ENCODE measurements at regions of chr1 and their contacts with region 1.

Region 1: DNA sequence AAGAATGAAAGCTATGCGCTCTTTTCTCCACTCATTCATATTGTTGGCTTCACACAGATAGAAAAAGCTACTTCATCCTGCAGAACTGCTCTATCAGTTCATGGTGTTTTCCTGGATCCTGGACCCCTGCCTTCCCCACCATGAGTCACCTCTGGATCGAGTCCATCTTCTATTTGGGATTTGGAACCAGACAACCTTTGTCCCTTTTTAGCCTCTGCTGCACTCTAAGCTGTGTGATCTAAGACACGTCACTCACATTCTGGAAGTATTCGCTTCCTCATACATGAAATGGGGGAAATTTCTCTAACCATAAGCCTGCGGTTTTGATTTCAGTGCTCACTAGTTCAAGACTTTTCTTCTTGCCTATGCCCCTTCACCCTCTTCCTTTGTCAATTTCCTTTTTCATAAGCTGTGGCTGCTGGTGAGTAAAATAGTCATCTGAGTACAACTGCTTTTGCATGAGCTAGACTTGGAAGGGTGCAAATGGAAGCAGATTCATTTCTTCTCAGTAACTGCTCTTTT is 14.1 kb upstream of the DEGS1 start:
- DNase-seq: peak; percentile 38
- H3K4me3 Mint-ChIP-seq: no peak overlapping the region
- H3K27ac Mint-ChIP-seq: peak overlapping the region; percentile 65
- H3K4me1 Mint-ChIP-seq: peaks cover 22% of the 10 kb centered on the region
- H3K27me3 Mint-ChIP-seq: no peaks in the 10 kb centered on the region
- CTCF ChIP-seq: no peak

Region 2: DNA sequence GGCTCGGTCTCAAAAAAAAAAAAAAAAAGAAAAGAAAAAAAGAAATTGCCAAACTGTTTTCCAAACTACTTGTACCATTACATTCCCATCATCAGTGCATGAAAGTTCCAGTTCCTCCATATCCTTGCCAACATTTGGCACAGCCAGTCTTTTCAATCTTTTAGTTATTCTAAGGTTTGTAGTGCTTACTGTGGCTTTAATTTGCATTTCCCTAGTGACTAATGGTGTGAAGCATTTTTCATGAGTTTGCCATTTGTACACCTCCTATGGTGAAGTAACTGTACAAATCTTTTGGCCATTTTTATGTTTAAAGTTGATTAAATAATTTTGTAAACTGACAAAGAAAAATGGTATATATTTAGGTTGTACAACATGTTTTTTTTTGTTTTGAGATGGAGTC is 84.8 kb after region 1 on chr1:
- CTCF ChIA-PET with region 1: no interaction called
- intact Hi-C with region 1: no loop called
- DNase-seq: no peak
- H3K4me3 Mint-ChIP-seq: no peak overlapping the region
- H3K27ac Mint-ChIP-seq: no peak overlapping the region
- H3K4me1 Mint-ChIP-seq: no peaks in the 10 kb centered on the region
- H3K27me3 Mint-ChIP-seq: no peaks in the 10 kb centered on the region
- CTCF ChIP-seq: no peak

Region 3: GRCh38 chr1:224266105-224266935 is 97.4 kb after region 1 on chr1:
- CTCF ChIA-PET with region 1: no interaction called
- intact Hi-C with region 1: loop called (anchors 10 kb)
- DNase-seq: no peak
- H3K4me3 Mint-ChIP-seq: no peak overlapping the region
- H3K27ac Mint-ChIP-seq: no peak overlapping the region
- H3K4me1 Mint-ChIP-seq: no peaks in the 10 kb centered on the region
- H3K27me3 Mint-ChIP-seq: no peaks in the 10 kb centered on the region
- CTCF ChIP-seq: no peak

Region 4: DNA sequence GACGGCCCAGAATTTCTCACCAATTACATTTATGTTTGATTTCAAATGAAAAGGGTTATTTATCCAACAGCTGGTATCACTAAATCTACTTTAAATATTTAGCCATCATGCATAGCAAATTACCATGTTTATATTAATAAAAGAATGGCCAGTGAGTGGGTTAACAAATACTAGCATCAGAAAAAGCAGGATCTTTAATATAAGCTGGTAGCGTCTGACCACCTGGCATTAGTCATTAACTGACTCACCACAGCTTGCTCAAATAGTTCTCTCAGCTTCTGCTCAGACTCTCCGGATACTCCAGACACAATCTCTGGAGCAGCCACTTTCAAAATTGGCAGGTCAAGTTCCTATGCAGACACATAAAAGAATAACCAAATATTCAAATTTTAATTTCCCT is 131.4 kb after region 1 on chr1:
- CTCF ChIA-PET with region 1: no interaction called
- intact Hi-C with region 1: loop called (anchors 10 kb)
- DNase-seq: peak; percentile 19
- H3K4me3 Mint-ChIP-seq: no peak overlapping the region
- H3K27ac Mint-ChIP-seq: no peak overlapping the region
- H3K4me1 Mint-ChIP-seq: peaks cover 7% of the 10 kb centered on the region
- H3K27me3 Mint-ChIP-seq: no peaks in the 10 kb centered on the region
- CTCF ChIP-seq: no peak

Region 5: GRCh38 chr1:224513787-224514209 is 344.9 kb after region 1 on chr1:
- CTCF ChIA-PET with region 1: no interaction called
- intact Hi-C with region 1: no loop called
- DNase-seq: peak; percentile 94
- H3K4me3 Mint-ChIP-seq: no peak overlapping the region
- H3K27ac Mint-ChIP-seq: no peak overlapping the region
- H3K4me1 Mint-ChIP-seq: no peaks in the 10 kb centered on the region
- H3K27me3 Mint-ChIP-seq: no peaks in the 10 kb centered on the region
- CTCF ChIP-seq: peak; percentile 94